Heart left ventricle (tissue), 16 donors: ENCODE measurements at regions of chr19 and their contacts with region 1.

Region 1: GRCh38 chr19:10751109-10751953 is 33.5 kb downstream of the DNM2 start:
- DNase-seq: peak in 3 of 5 donors; percentile 52 to 53 (median 52)
- ATAC-seq: peak; percentile 49 to 70 (median 58)
- H3K4me3 ChIP-seq: no peak overlapping the region
- H3K27ac ChIP-seq: peak overlapping the region; percentile 73 to 94 (median 87)
- H3K4me1 ChIP-seq: peaks cover 24 to 88% (median 59%) of the 10 kb centered on the region in 12 donors
- H3K27me3 ChIP-seq: no peaks in the 10 kb centered on the region
- CTCF ChIP-seq: no peak
- POLR2A ChIP-seq: no peak

Region 2: DNA sequence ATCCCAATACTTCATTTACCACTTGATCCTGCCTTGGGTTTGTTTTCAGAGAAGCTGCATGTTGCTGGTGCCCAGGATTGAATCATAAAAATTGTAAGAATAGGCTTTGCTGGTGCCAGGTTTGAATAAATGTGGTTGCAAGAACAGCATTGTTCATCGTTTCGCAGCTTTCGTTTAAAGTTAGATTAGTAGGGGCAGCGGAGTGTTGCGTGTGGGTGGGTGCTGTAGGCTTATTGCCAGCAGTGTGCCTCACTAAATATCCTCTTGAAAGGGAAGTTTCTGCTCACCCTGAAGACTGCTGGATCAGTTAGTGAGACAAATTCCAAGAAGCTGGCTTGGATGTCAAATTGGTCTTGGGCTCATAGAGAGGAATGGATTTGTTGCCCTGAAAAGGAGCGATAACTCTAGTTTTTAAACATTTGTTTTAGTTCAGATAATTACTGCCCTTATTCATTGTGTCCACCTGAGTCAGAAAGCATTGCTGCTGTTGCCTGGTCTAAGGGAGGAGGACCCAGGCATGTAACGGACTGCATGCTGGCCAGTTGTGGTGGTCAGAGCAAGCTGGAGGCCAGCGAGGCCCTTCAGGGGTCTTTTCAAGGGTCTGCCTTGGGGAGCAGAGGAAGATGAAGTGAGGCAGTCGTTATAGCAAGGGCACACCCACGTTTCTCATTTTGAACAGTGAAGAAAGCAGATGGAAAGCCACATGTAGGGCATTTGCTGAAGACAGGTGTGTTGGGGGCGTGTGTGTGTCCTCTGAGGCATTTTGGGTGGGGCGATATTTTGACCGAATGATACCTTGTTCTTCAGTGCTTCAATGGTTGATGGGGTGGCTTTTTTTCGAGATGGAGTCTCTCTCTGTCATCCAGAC is 88.7 kb before region 1 on chr19:
- intact Hi-C with region 1: no loop called
- DNase-seq: peak in 1 of 5 donors; percentile 21
- ATAC-seq: peak in 1 of 4 donors; percentile 17
- H3K4me3 ChIP-seq: no peak overlapping the region
- H3K27ac ChIP-seq: peak overlapping the region in 1 of 12 donors; percentile 41
- H3K4me1 ChIP-seq: peaks cover 0 to 70% (median 43%) of the 10 kb centered on the region in 12 donors
- H3K27me3 ChIP-seq: no peaks in the 10 kb centered on the region
- CTCF ChIP-seq: no peak
- POLR2A ChIP-seq: no peak

Region 3: DNA sequence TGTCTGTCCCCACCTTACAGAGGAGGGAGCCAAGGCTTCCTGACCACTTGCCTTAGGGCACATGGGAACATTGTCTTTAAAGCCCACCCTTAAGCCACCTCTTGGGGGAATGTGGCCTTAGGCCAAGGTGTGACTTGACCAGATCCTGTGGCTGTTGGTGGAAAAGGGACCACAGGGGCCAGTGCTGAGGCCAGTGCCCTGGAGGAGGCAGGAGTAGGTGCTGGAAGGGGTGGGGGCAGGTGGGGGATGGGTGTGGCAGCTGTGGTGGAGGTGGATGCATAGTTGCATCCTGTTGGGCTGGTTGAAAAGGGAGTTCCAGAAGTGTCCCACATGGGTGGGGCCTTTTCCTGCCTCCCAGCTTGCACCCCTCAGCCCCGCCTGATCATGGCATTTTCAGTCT is 11.3 kb after region 1 on chr19:
- intact Hi-C with region 1: loop called in 1 of 10 experiments (anchors 2 kb)
- DNase-seq: peak in 4 of 5 donors; percentile 48 to 67 (median 66)
- ATAC-seq: peak in 3 of 4 donors; percentile 4 to 53 (median 16)
- H3K4me3 ChIP-seq: no peak overlapping the region
- H3K27ac ChIP-seq: peak overlapping the region; percentile 52 to 89 (median 78)
- H3K4me1 ChIP-seq: peaks cover 19 to 94% (median 78%) of the 10 kb centered on the region in 12 donors
- H3K27me3 ChIP-seq: no peaks in the 10 kb centered on the region
- CTCF ChIP-seq: no peak
- POLR2A ChIP-seq: no peak